ENCODE measurements at regions of chr2 and their contacts with region 1.

Region 1: GRCh38 chr2:60794277-60794863 is 38.3 kb downstream of the PAPOLG start:
- DNase-seq: peak; percentile 21 to 49 (median 40)
- H3K4me3 ChIP-seq: no peak overlapping the region
- H3K4me3 Mint-ChIP-seq: no peak overlapping the region
- H3K27ac ChIP-seq: no peak overlapping the region
- H3K27ac Mint-ChIP-seq: peak overlapping the region in 3 of 7 donors; percentile 8 to 63 (median 21)
- H3K4me1 ChIP-seq: peaks cover 23 to 39% of the 10 kb centered on the region in 2 donors
- H3K4me1 Mint-ChIP-seq: peaks cover 28% of the 10 kb centered on the region
- H3K27me3 ChIP-seq: no peaks in the 10 kb centered on the region
- H3K27me3 Mint-ChIP-seq: no peaks in the 10 kb centered on the region
- CTCF ChIP-seq: peak; percentile 82

Region 2: GRCh38 chr2:60818272-60818671 is 23.9 kb after region 1 on chr2:
- intact Hi-C with region 1: no loop called
- DNase-seq: peak in 2 of 3 donors; percentile 40 to 83
- H3K4me3 ChIP-seq: no peak overlapping the region
- H3K4me3 Mint-ChIP-seq: no peak overlapping the region
- H3K27ac ChIP-seq: no peak overlapping the region
- H3K27ac Mint-ChIP-seq: peak overlapping the region in 1 of 7 donors; percentile 74
- H3K4me1 ChIP-seq: peaks cover 9% of the 10 kb centered on the region in 2 donors
- H3K4me1 Mint-ChIP-seq: peaks cover 25% of the 10 kb centered on the region
- H3K27me3 ChIP-seq: no peaks in the 10 kb centered on the region
- H3K27me3 Mint-ChIP-seq: peaks cover 0 to 3% (median 0%) of the 10 kb centered on the region in 3 donors
- CTCF ChIP-seq: peak; percentile 40

Region 3: GRCh38 chr2:60834270-60834962 is 40.0 kb after region 1 on chr2:
- intact Hi-C with region 1: no loop called
- DNase-seq: peak; percentile 47 to 94 (median 49)
- H3K4me3 ChIP-seq: no peak overlapping the region
- H3K4me3 Mint-ChIP-seq: peak overlapping the region; percentile 17 to 61
- H3K27ac ChIP-seq: peak overlapping the region; percentile 48 to 70
- H3K27ac Mint-ChIP-seq: peak overlapping the region; percentile 76 to 94 (median 89)
- H3K4me1 ChIP-seq: peaks cover 25 to 29% of the 10 kb centered on the region in 2 donors
- H3K4me1 Mint-ChIP-seq: peaks cover 28% of the 10 kb centered on the region
- H3K27me3 ChIP-seq: no peaks in the 10 kb centered on the region
- H3K27me3 Mint-ChIP-seq: peaks cover 0 to 7% (median 2%) of the 10 kb centered on the region in 3 donors
- CTCF ChIP-seq: no peak

Region 4: GRCh38 chr2:60867848-60868247 is 73.5 kb after region 1 on chr2:
- intact Hi-C with region 1: loop called in 1 of 2 experiments (anchors 5 kb)
- DNase-seq: peak; percentile 93 to 98 (median 97)
- H3K4me3 ChIP-seq: peak overlapping the region in 1 of 3 experiments; percentile 64
- H3K4me3 Mint-ChIP-seq: peak overlapping the region in 1 of 2 donors; percentile 67
- H3K27ac ChIP-seq: peak overlapping the region; percentile 86 to 91
- H3K27ac Mint-ChIP-seq: peak overlapping the region; percentile 90 to 96 (median 95)
- H3K4me1 ChIP-seq: peaks cover 25 to 33% of the 10 kb centered on the region in 2 donors
- H3K4me1 Mint-ChIP-seq: peaks cover 27% of the 10 kb centered on the region
- H3K27me3 ChIP-seq: no peaks in the 10 kb centered on the region
- H3K27me3 Mint-ChIP-seq: no peaks in the 10 kb centered on the region
- CTCF ChIP-seq: no peak

Region 5: GRCh38 chr2:60881047-60881932 is 86.9 kb after region 1 on chr2 and contains the start of gene REL:
- intact Hi-C with region 1: loop called (anchors 5 kb)
- DNase-seq: peak; percentile 92 to 96 (median 92)
- H3K4me3 ChIP-seq: peak within 1 kb of the TSS; percentile 81 to 100 (median 82)
- H3K4me3 Mint-ChIP-seq: peak within 1 kb of the TSS; percentile 97 to 99
- H3K27ac ChIP-seq: peak within 1 kb of the TSS; percentile 94 to 99
- H3K27ac Mint-ChIP-seq: peak within 1 kb of the TSS; percentile 97 to 99 (median 98)
- H3K4me1 ChIP-seq: peaks cover 16 to 25% of the 10 kb centered on the region in 2 donors
- H3K4me1 Mint-ChIP-seq: peaks cover 23% of the 10 kb centered on the region
- H3K27me3 ChIP-seq: no peaks in the 10 kb centered on the region
- H3K27me3 Mint-ChIP-seq: peaks cover 0 to 4% (median 0%) of the 10 kb centered on the region in 3 donors
- CTCF ChIP-seq: no peak
- polyA plus RNA-seq, gene REL: 18.3 to 34.3 (median 20.3) TPM

Region 6: GRCh38 chr2:60992985-60993392 is 198.6 kb after region 1 on chr2:
- intact Hi-C with region 1: loop called (anchors 2 kb)
- DNase-seq: peak; percentile 81 to 92 (median 92)
- H3K4me3 ChIP-seq: peak overlapping the region in 1 of 3 experiments; percentile 36
- H3K4me3 Mint-ChIP-seq: peak overlapping the region; percentile 27 to 51
- H3K27ac ChIP-seq: peak overlapping the region; percentile 74 to 84
- H3K27ac Mint-ChIP-seq: peak overlapping the region; percentile 94 to 98 (median 95)
- H3K4me1 ChIP-seq: peaks cover 11 to 25% of the 10 kb centered on the region in 2 donors
- H3K4me1 Mint-ChIP-seq: peaks cover 40% of the 10 kb centered on the region
- H3K27me3 ChIP-seq: no peaks in the 10 kb centered on the region
- H3K27me3 Mint-ChIP-seq: peaks cover 0 to 4% (median 0%) of the 10 kb centered on the region in 3 donors
- CTCF ChIP-seq: no peak

Region 7: DNA sequence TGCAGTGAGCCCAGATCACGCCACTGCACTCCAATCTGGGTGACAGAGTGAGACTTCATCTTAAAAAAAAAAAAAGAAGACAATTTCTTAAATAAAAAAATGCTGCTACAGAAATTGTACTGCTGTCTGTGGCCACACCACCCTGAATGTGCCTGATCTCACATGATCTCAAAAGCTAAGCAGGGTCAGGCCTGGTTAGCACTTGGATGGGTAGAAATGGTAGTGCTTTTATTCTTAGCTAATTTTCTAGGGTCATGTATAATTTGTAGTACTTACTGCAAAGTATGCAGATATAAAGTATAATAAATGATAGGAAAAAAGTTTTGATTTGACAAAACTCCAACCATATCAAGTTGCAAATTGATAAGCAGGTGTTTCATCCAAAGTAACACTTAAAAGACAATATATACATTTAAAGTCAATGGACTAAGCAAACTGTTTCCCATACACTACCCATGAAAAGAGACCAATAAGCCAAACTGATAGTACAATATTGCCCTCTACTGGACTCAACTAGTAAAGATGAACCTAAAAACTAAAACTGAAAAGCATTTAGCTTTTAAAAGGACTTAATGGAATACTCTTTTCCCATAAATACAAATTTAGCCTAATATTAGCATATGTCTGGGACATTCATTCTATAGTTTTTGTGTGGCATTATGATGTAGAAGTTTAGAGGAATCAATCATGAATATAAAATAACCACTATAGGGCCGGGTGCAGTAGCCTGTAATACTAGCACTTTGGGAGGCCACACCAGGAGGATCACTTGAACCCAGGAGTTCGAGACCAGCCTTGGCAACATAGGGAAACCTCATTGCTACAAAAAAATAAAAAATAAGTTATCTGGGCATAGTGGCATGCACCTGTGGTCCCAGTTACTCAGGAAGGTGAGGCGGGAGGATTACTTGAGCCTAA is 204.5 kb after region 1 on chr2:
- intact Hi-C with region 1: loop called in 1 of 2 experiments (anchors 2 kb)
- DNase-seq: peak in 2 of 3 donors; percentile 57 to 69
- H3K4me3 ChIP-seq: no peak overlapping the region
- H3K4me3 Mint-ChIP-seq: no peak overlapping the region
- H3K27ac ChIP-seq: no peak overlapping the region
- H3K27ac Mint-ChIP-seq: peak overlapping the region in 2 of 7 donors; percentile 35 to 63
- H3K4me1 ChIP-seq: peaks cover 4 to 8% of the 10 kb centered on the region in 2 donors
- H3K4me1 Mint-ChIP-seq: peaks cover 15% of the 10 kb centered on the region
- H3K27me3 ChIP-seq: no peaks in the 10 kb centered on the region
- H3K27me3 Mint-ChIP-seq: peaks cover 0 to under 1% (median 0%) of the 10 kb centered on the region in 3 donors
- CTCF ChIP-seq: peak; percentile 87

Region 8: DNA sequence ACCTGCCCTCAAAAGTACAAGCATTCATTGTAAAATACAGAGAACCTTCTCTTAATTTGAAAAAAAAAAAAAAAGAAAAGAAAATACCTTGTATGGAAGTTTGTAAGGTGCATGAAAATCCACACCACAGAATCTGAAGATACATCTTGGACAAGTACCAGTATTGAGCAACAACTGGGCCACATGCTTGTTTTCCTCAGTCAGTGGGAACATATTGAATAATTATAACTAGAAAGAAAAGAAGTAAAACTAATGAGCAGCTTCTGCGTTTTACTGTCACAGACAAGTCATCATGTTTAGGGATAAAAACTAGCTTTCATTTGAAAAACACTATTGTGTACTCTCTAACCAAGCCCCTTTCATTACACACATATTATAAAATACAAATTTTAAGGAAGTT is 217.3 kb after region 1 on chr2:
- intact Hi-C with region 1: loop called in 1 of 2 experiments (anchors 5 kb)
- DNase-seq: peak in 2 of 3 donors; percentile 37 to 51
- H3K4me3 ChIP-seq: no peak overlapping the region
- H3K4me3 Mint-ChIP-seq: no peak overlapping the region
- H3K27ac ChIP-seq: peak overlapping the region in 1 of 2 donors; percentile 66
- H3K27ac Mint-ChIP-seq: peak overlapping the region; percentile 67 to 94 (median 88)
- H3K4me1 ChIP-seq: peaks cover 41 to 48% of the 10 kb centered on the region in 2 donors
- H3K4me1 Mint-ChIP-seq: peaks cover 45% of the 10 kb centered on the region
- H3K27me3 ChIP-seq: no peaks in the 10 kb centered on the region
- H3K27me3 Mint-ChIP-seq: no peaks in the 10 kb centered on the region
- CTCF ChIP-seq: no peak

Measured in CD14-positive monocyte (primary cell).